ENCODE measurements at regions of chr22 and their contacts with region 1.

Region 1: GRCh38 chr22:50469377-50470305 is 5.2 kb downstream of the SBF1 start:
- DNase-seq: peak; percentile 96
- ATAC-seq: peak; percentile 79
- H3K4me3 ChIP-seq: peak overlapping the region in 4 of 5 experiments; percentile 1 to 39 (median 29)
- H3K4me3 Mint-ChIP-seq: peak overlapping the region; percentile 83
- H3K27ac ChIP-seq: peak overlapping the region; percentile 69 to 90
- H3K27ac Mint-ChIP-seq: peak overlapping the region; percentile 96
- H3K4me1 ChIP-seq: peaks cover 60 to 66% of the 10 kb centered on the region in 2 donors
- H3K4me1 Mint-ChIP-seq: peaks cover 69% of the 10 kb centered on the region
- H3K27me3 ChIP-seq: no peaks in the 10 kb centered on the region
- H3K27me3 Mint-ChIP-seq: no peaks in the 10 kb centered on the region
- CTCF ChIP-seq: peak; percentile 31

Region 2: GRCh38 chr22:50044485-50045118 is 425.0 kb before region 1 on chr22:
- CTCF ChIA-PET with region 1: no interaction called
- POLR2A ChIA-PET with region 1: no interaction called
- intact Hi-C with region 1: no loop called
- DNase-seq: no peak
- ATAC-seq: no peak
- H3K4me3 ChIP-seq: no peak overlapping the region
- H3K4me3 Mint-ChIP-seq: no peak overlapping the region
- H3K27ac ChIP-seq: no peak overlapping the region
- H3K27ac Mint-ChIP-seq: no peak overlapping the region
- H3K4me1 ChIP-seq: no peaks in the 10 kb centered on the region
- H3K4me1 Mint-ChIP-seq: no peaks in the 10 kb centered on the region
- H3K27me3 ChIP-seq: peaks cover 0 to 13% (median 0%) of the 10 kb centered on the region in 4 experiments
- H3K27me3 Mint-ChIP-seq: peaks cover 11% of the 10 kb centered on the region
- CTCF ChIP-seq: no peak

Region 3: DNA sequence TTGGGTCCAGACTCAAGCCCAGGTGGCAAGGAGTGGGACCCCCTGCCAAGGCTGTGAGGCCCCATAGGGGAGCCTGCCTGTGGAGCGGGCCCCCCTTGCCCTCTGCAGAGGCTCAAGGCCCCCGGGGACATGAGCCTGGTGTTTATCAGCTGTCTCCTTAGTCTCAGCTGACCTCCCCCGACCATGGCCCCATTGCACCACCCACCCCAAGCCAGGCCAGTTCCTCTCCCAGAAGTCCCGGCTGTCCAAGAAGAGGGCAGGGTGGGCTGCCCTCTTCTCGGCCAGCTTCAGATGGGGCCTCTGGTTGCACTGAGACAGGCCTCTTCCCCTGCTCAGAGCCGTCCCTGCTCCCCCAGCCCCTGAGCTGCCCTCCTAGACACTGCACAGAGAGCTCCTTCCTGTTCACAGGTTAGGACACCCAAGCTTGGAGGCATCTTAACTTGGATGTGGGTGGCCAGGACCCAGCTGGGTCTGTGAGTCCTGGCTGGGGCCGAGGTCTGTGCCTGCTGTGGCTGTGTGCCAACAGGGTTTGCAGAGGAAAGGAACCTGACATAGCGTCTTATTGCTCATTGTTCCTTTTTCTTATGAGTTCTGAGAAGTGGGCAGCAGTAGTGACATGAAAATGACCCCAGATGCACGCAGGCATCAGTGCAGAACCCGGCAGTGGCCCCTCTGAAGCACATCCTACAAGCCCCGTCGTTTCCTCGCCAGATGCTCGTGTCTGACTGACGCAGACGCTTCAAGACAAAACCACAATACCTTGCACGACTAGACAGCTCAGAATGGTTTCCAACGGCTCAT is 278.5 kb before region 1 on chr22:
- CTCF ChIA-PET with region 1: no interaction called
- POLR2A ChIA-PET with region 1: interaction called, 5 read pairs
- intact Hi-C with region 1: loop called (anchors 1 kb)
- DNase-seq: peak; percentile 97
- ATAC-seq: peak; percentile 44
- H3K4me3 ChIP-seq: peak overlapping the region; percentile 14 to 63 (median 48)
- H3K4me3 Mint-ChIP-seq: peak overlapping the region; percentile 86
- H3K27ac ChIP-seq: peak overlapping the region; percentile 99 to 100
- H3K27ac Mint-ChIP-seq: peak overlapping the region; percentile 99
- H3K4me1 ChIP-seq: peaks cover 84 to 97% of the 10 kb centered on the region in 2 donors
- H3K4me1 Mint-ChIP-seq: peaks cover 62% of the 10 kb centered on the region
- H3K27me3 ChIP-seq: no peaks in the 10 kb centered on the region
- H3K27me3 Mint-ChIP-seq: no peaks in the 10 kb centered on the region
- CTCF ChIP-seq: no peak

Region 4: GRCh38 chr22:50244420-50245213 is 225.0 kb before region 1 on chr22 and contains the start of gene TUBGCP6:
- CTCF ChIA-PET with region 1: interaction called, 4 read pairs
- POLR2A ChIA-PET with region 1: interaction called, 5 read pairs
- intact Hi-C with region 1: loop called (anchors 1 kb)
- DNase-seq: peak; percentile 96
- ATAC-seq: peak; percentile 81
- H3K4me3 ChIP-seq: peak within 1 kb of the TSS; percentile 65 to 99 (median 90)
- H3K4me3 Mint-ChIP-seq: peak within 1 kb of the TSS; percentile 96
- H3K27ac ChIP-seq: peak within 1 kb of the TSS; percentile 91 to 96
- H3K27ac Mint-ChIP-seq: peak within 1 kb of the TSS; percentile 99
- H3K4me1 ChIP-seq: peaks cover 33 to 66% of the 10 kb centered on the region in 2 donors
- H3K4me1 Mint-ChIP-seq: peaks cover 40% of the 10 kb centered on the region
- H3K27me3 ChIP-seq: no peaks in the 10 kb centered on the region
- H3K27me3 Mint-ChIP-seq: no peaks in the 10 kb centered on the region
- CTCF ChIP-seq: no peak
- total RNA-seq, gene TUBGCP6: 137 and 139 TPM in 2 replicates

Region 5: GRCh38 chr22:50444663-50445062 is 25.0 kb before region 1 on chr22:
- CTCF ChIA-PET with region 1: interaction called, 10 read pairs
- POLR2A ChIA-PET with region 1: interaction called, 9 read pairs
- intact Hi-C with region 1: loop called (anchors 2 kb)
- DNase-seq: no peak
- ATAC-seq: no peak
- H3K4me3 ChIP-seq: no peak overlapping the region
- H3K4me3 Mint-ChIP-seq: no peak overlapping the region
- H3K27ac ChIP-seq: peak overlapping the region in 1 of 2 donors; percentile 68
- H3K27ac Mint-ChIP-seq: peak overlapping the region; percentile 75
- H3K4me1 ChIP-seq: peaks cover 10 to 20% of the 10 kb centered on the region in 2 donors
- H3K4me1 Mint-ChIP-seq: peaks cover 21% of the 10 kb centered on the region
- H3K27me3 ChIP-seq: no peaks in the 10 kb centered on the region
- H3K27me3 Mint-ChIP-seq: no peaks in the 10 kb centered on the region
- CTCF ChIP-seq: no peak

Region 6: DNA sequence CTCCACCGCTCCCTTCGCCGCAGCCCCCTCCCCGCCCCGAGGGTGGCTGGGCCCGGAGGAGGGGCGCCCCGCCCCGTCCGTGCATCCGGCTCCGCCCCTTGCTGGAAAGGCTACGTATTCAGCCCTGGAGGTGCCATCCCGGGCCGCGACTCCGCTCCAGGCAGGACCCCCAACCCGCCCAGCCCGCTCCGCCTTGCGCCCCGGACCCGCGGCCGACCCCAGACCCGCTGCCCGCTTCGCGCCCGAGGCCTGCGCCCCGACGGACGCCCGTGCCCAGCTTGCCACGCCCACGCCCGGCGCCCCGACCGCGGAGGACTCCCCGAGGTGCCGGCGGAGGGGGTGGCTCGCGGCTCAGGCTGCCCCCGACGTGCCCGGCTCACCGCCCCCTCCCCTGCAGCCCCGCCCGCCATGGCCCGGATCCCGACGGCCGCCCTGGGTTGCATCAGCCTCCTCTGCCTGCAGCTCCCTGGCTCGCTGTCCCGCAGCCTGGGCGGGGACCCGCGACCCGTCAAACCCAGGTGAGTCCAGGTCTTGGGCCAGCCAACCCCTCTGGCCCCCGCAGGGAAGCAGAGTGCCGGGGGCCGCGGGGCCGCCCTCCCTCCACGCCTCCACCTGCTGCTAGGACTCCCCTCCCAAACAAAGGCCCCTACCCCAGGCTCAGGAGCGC is 11.9 kb after region 1 on chr22 and contains the start of gene ADM2:
- CTCF ChIA-PET with region 1: interaction called, 6 read pairs
- POLR2A ChIA-PET with region 1: interaction called, 8 read pairs
- intact Hi-C with region 1: loop called (anchors 1 kb)
- DNase-seq: peak; percentile 66
- ATAC-seq: peak; percentile 82
- H3K4me3 ChIP-seq: peak within 1 kb of the TSS in 4 of 5 experiments; percentile 24 to 62 (median 51)
- H3K4me3 Mint-ChIP-seq: peak within 1 kb of the TSS; percentile 81
- H3K27ac ChIP-seq: no peak within 1 kb of the TSS
- H3K27ac Mint-ChIP-seq: peak within 1 kb of the TSS; percentile 20
- H3K4me1 ChIP-seq: peaks cover 16 to 31% of the 10 kb centered on the region in 2 donors
- H3K4me1 Mint-ChIP-seq: peaks cover 25% of the 10 kb centered on the region
- H3K27me3 ChIP-seq: peaks cover 0 to 26% (median 7%) of the 10 kb centered on the region in 4 experiments
- H3K27me3 Mint-ChIP-seq: peaks cover 4% of the 10 kb centered on the region
- CTCF ChIP-seq: no peak
- total RNA-seq, gene ADM2: 2.6 and 3.7 TPM in 2 replicates

Region 7: DNA sequence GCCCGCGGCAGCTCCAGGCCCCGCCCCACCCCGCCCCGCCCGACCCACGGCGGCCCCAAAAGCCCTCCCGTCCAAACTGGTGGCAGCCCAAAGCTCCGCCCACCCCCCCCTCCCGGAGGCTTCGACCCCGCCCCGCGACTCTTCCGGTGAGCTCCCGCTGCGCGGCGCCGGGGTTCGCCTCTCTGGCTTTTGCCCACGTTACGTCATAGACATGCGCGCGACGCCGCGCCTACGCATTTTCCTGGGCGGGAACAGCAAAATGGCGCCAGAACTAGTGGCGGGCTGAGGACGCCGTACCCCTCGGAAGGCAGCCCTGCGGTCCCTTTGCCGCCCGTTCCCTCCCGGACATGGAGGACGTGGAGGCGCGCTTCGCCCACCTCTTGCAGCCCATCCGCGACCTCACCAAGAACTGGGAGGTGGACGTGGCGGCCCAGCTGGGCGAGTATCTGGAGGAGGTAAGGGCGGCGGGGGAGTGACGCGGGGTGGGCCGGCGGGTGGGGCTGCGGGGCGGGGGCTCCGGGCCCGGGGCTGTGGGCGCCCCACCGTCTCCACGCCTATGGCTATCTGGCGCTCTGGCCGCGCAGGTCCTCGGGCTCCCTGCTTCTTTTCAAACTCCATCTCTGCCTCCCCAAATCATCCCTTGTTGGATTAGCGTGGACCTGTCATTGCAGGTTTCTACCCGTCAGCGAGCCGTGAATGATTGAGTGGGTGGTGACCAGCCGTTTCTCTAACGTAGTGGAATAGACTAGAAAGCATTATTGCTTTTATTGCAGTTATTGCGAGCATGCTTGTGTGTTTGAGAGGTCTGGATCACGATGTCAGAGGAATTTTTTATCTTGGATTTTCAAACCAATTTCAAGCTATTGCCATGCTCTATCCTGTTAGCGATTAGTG is 38.6 kb after region 1 on chr22 and contains the start of gene NCAPH2:
- CTCF ChIA-PET with region 1: interaction called, 5 read pairs
- POLR2A ChIA-PET with region 1: interaction called, 9 read pairs
- intact Hi-C with region 1: loop called (anchors 1 kb)
- DNase-seq: peak; percentile 98
- ATAC-seq: peak; percentile 71
- H3K4me3 ChIP-seq: peak within 1 kb of the TSS; percentile 75 to 92 (median 91)
- H3K4me3 Mint-ChIP-seq: peak within 1 kb of the TSS; percentile 95
- H3K27ac ChIP-seq: peak within 1 kb of the TSS; percentile 88 to 92
- H3K27ac Mint-ChIP-seq: peak within 1 kb of the TSS; percentile 98
- H3K4me1 ChIP-seq: peaks cover 19 to 29% of the 10 kb centered on the region in 2 donors
- H3K4me1 Mint-ChIP-seq: peaks cover 28% of the 10 kb centered on the region
- H3K27me3 ChIP-seq: no peaks in the 10 kb centered on the region
- H3K27me3 Mint-ChIP-seq: no peaks in the 10 kb centered on the region
- CTCF ChIP-seq: no peak
- total RNA-seq, gene NCAPH2: 71.5 and 76.9 TPM in 2 replicates